GM12878 (cell line): ENCODE measurements at regions of chrX and their contacts with region 1.

Region 1: DNA sequence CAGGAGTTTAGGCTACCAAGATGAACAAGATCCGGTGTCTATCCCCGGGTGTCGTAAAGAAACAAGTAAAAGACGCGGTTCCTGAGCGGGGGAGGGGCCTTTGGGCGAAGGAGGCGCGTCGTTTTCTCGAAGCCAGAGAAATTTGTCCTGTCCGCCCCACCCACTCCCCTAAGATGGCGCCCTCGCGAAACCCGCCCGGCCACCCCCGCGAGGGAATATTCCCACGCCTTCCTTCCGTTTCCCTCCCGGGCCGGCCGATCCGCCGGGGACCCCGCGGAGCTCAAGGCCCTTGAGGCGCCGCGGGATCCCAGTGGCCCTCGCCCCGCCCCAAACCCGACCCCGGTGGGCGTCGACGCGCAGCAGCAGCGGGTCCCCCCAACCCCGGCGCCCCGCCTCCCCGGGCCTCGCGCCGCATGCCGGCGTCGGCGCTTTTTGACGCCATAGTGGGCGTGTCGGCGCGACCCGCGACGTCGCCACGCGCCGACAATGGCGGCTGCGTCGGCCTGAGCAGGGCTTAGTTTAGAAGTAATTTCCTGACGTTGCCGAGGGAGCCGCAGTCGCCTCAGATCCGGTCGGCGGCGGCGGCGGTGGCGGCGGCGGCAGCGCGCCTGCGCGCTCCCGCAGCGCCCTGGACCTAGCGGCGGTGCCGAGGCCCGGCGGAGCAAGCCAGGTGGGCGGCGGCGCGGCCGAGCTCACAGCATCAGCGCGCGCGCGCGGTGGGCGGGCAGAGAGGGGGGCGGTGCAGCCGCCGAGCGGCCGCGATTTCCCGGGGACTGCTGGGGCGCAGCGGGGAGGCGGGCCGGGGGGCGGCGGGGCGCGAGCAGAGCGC is at the start of gene HTATSF1:
- DNase-seq: peak; percentile 48
- ATAC-seq: peak; percentile 82
- H3K4me3 ChIP-seq: peak within 1 kb of the TSS; percentile 72
- H3K27ac ChIP-seq: peak within 1 kb of the TSS; percentile 90
- H3K4me1 ChIP-seq: no peaks in the 10 kb centered on the region
- H3K27me3 ChIP-seq: no peaks in the 10 kb centered on the region; a peak in 1 of 4 replicates
- CTCF ChIP-seq: no peak
- EP300 ChIP-seq: no peak
- POLR2A ChIP-seq: peak; percentile 57
- RAD21 ChIP-seq: no peak
- polyA plus RNA-seq, gene HTATSF1: 13.2 to 26.9 TPM

Region 2: DNA sequence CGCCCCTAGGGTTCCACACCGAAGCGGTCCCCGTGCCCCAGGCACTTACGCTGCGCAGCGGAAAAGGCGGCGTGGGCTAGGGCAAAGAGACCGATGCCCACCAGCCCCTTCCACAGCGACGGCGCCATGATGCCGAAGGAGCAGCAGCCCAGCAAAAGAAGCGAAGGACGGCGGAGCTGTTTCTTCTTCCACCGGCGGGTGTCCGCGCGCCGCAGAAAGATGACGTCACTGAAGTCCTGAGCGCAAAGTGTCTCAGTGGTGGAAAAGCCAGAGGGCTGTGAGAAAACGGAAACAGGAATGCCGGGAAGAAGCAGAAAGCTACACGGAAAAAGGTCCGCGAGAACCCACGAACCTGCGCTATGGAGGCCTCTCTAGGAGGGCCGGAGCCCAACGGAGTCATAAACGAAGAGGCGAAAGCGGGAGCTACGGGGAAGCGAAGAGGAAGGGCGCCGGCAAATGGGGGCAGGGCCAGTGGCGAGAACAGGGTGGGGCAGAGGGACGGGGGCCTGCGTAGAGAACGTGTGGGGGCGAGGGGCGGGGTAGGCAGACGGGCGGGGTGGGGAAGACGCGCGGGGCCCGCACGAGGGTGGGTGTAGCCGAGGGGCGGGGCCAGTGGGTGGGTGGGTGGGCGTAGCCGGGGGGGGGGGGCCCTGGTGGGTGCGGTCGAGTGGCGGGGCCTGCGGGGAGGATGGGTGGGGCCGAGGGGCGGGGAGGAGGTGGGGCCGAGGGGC is 523.3 kb before region 1 on chrX and contains the start of gene MMGT1:
- CTCF ChIA-PET with region 1: interaction called, 3 read pairs
- POLR2A ChIA-PET with region 1: no interaction called
- RAD21 ChIA-PET with region 1: no interaction called
- SMC1A ChIA-PET with region 1: no interaction called
- in situ Hi-C with region 1: no loop called
- intact Hi-C with region 1: loop called (anchors 5 kb)
- DNase-seq: peak; percentile 50
- ATAC-seq: peak; percentile 93
- H3K4me3 ChIP-seq: peak within 1 kb of the TSS; percentile 66
- H3K27ac ChIP-seq: peak within 1 kb of the TSS; percentile 81
- H3K4me1 ChIP-seq: no peaks in the 10 kb centered on the region
- H3K27me3 ChIP-seq: no peaks in the 10 kb centered on the region
- CTCF ChIP-seq: no peak
- EP300 ChIP-seq: no peak
- POLR2A ChIP-seq: peak; percentile 75
- RAD21 ChIP-seq: no peak
- polyA plus RNA-seq, gene MMGT1: 9.3 to 9.5 TPM

Region 3: DNA sequence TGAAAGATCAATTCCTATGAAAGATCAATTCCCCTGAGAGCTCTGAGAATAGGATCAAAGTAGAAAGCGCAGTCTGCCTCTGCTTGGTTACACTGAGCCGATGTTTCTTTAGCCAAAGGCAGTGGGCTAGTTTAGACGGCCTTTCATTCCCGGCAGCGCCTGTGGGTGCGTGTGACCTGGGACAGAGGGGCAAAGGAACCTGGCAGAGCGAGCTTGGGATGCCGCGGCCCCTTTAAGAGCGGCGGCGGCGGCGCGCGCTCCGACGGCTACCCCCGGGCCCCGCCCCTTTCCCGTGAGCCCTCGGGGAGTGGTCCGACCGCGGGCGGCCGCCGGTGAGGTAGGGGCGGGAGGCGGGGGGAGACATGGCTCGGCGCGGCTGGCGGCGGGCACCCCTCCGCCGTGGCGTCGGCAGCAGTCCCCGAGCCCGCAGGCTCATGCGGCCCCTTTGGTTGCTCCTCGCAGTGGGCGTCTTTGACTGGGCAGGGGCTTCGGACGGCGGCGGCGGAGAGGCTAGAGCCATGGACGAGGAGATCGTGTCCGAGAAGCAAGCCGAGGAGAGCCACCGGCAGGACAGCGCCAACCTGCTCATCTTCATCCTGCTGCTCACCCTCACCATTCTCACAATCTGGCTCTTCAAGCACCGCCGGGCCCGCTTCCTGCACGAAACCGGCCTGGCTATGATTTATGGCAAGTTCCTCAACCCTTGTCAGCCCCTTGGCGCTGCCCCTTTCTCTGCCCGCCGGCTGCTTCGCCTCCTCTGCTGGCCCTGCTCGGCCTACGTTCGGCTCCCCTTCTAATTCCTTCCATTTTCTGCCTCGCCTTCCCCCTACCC is 511.6 kb before region 1 on chrX and contains the start of gene SLC9A6:
- CTCF ChIA-PET with region 1: no interaction called
- POLR2A ChIA-PET with region 1: no interaction called
- RAD21 ChIA-PET with region 1: no interaction called
- SMC1A ChIA-PET with region 1: no interaction called
- in situ Hi-C with region 1: no loop called
- intact Hi-C with region 1: loop called (anchors 2 kb)
- DNase-seq: no peak
- ATAC-seq: peak; percentile 96
- H3K4me3 ChIP-seq: peak within 1 kb of the TSS; percentile 68
- H3K27ac ChIP-seq: peak within 1 kb of the TSS; percentile 65
- H3K4me1 ChIP-seq: no peaks in the 10 kb centered on the region
- H3K27me3 ChIP-seq: no peaks in the 10 kb centered on the region
- CTCF ChIP-seq: no peak
- EP300 ChIP-seq: no peak
- POLR2A ChIP-seq: peak; percentile 72
- RAD21 ChIP-seq: no peak
- polyA plus RNA-seq, gene SLC9A6: 4.5 TPM

Region 4: GRCh38 chrX:136549226-136549625 is 52.2 kb after region 1 on chrX:
- CTCF ChIA-PET with region 1: no interaction called
- POLR2A ChIA-PET with region 1: no interaction called
- RAD21 ChIA-PET with region 1: no interaction called
- SMC1A ChIA-PET with region 1: no interaction called
- in situ Hi-C with region 1: no loop called
- intact Hi-C with region 1: no loop called
- DNase-seq: no peak
- ATAC-seq: no peak
- H3K4me3 ChIP-seq: no peak overlapping the region
- H3K27ac ChIP-seq: no peak overlapping the region
- H3K4me1 ChIP-seq: no peaks in the 10 kb centered on the region
- H3K27me3 ChIP-seq: no peaks in the 10 kb centered on the region; a peak in 1 of 4 replicates
- CTCF ChIP-seq: no peak
- EP300 ChIP-seq: no peak
- POLR2A ChIP-seq: no peak
- RAD21 ChIP-seq: no peak

Region 5: DNA sequence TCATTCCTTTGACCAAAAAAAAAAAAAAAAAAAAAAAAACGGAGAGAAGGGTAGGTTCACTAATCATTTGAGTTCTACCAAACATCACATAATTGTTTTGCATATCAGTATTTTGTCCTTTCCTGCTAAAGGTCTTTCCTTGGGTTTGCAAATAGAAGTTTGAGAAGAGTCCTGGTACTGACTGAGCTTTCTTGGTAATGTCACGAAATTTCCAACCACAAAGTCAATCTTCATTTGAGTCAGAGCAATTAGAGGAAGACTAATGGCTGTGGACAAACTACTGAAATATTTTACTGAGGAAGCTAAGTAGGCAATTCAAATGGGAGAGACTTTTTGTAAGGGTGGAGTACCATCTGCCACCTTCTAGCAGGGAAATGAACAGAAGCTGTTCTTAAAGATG is 129.3 kb after region 1 on chrX:
- CTCF ChIA-PET with region 1: no interaction called
- POLR2A ChIA-PET with region 1: no interaction called
- RAD21 ChIA-PET with region 1: no interaction called
- SMC1A ChIA-PET with region 1: no interaction called
- in situ Hi-C with region 1: no loop called
- intact Hi-C with region 1: no loop called
- DNase-seq: peak; percentile 36
- ATAC-seq: peak; percentile 82
- H3K4me3 ChIP-seq: no peak overlapping the region
- H3K27ac ChIP-seq: no peak overlapping the region
- H3K4me1 ChIP-seq: peaks cover 10% of the 10 kb centered on the region
- H3K27me3 ChIP-seq: no peaks in the 10 kb centered on the region
- CTCF ChIP-seq: no peak
- EP300 ChIP-seq: no peak
- POLR2A ChIP-seq: no peak
- RAD21 ChIP-seq: no peak